CD4-positive, alpha-beta T cell (primary cell): ENCODE measurements at regions of chr16 and their contacts with region 1.

Region 1: DNA sequence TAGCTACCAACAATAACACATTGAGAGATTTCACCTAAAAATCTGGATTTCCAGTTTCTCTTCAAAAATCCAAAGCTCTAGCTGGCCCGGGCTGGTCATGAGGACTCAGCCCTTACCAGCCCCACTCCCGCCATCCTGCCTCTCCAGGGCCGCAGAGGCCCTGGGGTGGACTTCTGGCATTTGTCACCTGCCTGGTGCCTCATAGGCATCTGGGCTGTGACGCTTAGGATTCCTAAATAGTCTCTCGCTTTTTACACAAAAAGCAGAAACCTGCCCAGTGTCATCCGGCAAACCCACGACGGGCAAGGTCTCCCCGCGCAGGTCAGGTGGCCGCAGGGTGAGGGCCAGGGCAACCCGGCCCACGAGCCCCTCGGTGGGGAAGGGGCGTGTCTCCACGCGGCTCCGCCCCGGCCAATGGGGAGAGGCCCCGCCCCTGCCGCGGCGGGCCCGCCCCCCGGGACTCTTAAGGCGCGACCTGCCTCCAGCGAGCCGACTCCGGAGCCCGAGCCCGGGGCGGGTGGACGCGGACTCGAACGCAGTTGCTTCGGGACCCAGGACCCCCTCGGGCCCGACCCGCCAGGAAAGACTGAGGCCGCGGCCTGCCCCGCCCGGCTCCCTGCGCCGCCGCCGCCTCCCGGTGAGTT is at the start of gene VASN:
- DNase-seq: peak; percentile 54 to 86 (median 68)
- ATAC-seq: peak; percentile 71
- H3K4me3 ChIP-seq: peak within 1 kb of the TSS; percentile 49
- H3K4me3 Mint-ChIP-seq: peak within 1 kb of the TSS; percentile 89
- H3K27ac ChIP-seq: no peak within 1 kb of the TSS
- H3K27ac Mint-ChIP-seq: peak within 1 kb of the TSS; percentile 77
- H3K4me1 ChIP-seq: peaks cover 57% of the 10 kb centered on the region
- H3K4me1 Mint-ChIP-seq: peaks cover 35% of the 10 kb centered on the region
- H3K27me3 ChIP-seq: no peaks in the 10 kb centered on the region
- H3K27me3 Mint-ChIP-seq: no peaks in the 10 kb centered on the region
- CTCF ChIP-seq: no peak
- total RNA-seq, gene VASN: 0.70 to 0.77 TPM

Region 2: DNA sequence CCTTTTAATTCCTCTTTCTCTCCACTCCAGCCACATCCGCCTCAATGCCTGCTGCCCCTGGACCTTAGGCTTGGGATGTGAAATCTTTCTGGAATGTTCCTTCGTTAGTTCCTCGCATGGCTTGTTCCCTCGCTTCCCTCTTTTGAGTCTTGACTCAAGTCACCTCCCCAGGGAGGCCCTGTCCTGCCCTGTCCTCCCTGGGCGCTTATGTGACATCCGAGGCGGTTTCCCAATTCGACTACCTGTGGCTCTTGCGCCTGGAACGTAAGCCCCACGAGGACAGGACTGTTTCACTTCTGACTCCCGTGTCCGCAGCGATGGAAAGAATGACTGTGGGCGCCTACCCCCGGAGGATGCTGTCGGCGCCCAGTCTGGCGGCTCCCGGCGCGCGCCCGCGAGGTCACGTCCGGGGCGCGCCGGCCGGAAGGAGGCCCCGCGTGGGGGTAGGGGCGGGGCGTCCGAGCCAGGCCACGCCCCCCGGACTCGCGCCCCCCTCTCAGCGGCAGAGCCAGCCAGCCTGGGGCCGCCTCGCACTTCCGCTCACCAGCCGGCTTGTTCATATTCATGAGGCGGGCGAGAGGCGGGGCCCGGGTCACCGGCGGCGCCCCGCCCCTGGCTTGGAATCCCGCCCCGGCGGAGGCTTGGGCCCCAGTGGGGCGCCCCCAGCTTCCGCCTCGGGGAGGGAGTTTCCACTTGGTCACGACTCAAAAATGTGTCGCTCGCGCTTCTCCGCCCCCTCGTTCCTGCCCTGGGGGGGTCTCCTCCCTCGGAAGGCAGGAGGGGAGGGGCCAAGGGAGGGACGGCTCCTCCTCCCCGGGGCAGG is 64.1 kb before region 1 on chr16:
- CTCF ChIA-PET with region 1: no interaction called
- POLR2A ChIA-PET with region 1: no interaction called
- intact Hi-C with region 1: loop called in 1 of 2 experiments (anchors 1 kb)
- DNase-seq: peak; percentile 91 to 99 (median 96)
- ATAC-seq: peak; percentile 87
- H3K4me3 ChIP-seq: peak overlapping the region; percentile 72
- H3K4me3 Mint-ChIP-seq: peak overlapping the region; percentile 84
- H3K27ac ChIP-seq: peak overlapping the region; percentile 82 to 90
- H3K27ac Mint-ChIP-seq: peak overlapping the region; percentile 96
- H3K4me1 ChIP-seq: peaks cover 31% of the 10 kb centered on the region
- H3K4me1 Mint-ChIP-seq: peaks cover 15% of the 10 kb centered on the region
- H3K27me3 ChIP-seq: no peaks in the 10 kb centered on the region
- H3K27me3 Mint-ChIP-seq: no peaks in the 10 kb centered on the region
- CTCF ChIP-seq: no peak

Region 3: GRCh38 chr16:4386451-4386805 is 14.9 kb after region 1 on chr16:
- CTCF ChIA-PET with region 1: no interaction called
- POLR2A ChIA-PET with region 1: no interaction called
- intact Hi-C with region 1: loop called in 1 of 2 experiments (anchors 2 kb)
- DNase-seq: no peak
- ATAC-seq: no peak
- H3K4me3 ChIP-seq: no peak overlapping the region
- H3K4me3 Mint-ChIP-seq: no peak overlapping the region
- H3K27ac ChIP-seq: no peak overlapping the region
- H3K27ac Mint-ChIP-seq: peak overlapping the region; percentile 80
- H3K4me1 ChIP-seq: peaks cover 6% of the 10 kb centered on the region
- H3K4me1 Mint-ChIP-seq: no peaks in the 10 kb centered on the region
- H3K27me3 ChIP-seq: no peaks in the 10 kb centered on the region
- H3K27me3 Mint-ChIP-seq: no peaks in the 10 kb centered on the region
- CTCF ChIP-seq: no peak

Region 4: DNA sequence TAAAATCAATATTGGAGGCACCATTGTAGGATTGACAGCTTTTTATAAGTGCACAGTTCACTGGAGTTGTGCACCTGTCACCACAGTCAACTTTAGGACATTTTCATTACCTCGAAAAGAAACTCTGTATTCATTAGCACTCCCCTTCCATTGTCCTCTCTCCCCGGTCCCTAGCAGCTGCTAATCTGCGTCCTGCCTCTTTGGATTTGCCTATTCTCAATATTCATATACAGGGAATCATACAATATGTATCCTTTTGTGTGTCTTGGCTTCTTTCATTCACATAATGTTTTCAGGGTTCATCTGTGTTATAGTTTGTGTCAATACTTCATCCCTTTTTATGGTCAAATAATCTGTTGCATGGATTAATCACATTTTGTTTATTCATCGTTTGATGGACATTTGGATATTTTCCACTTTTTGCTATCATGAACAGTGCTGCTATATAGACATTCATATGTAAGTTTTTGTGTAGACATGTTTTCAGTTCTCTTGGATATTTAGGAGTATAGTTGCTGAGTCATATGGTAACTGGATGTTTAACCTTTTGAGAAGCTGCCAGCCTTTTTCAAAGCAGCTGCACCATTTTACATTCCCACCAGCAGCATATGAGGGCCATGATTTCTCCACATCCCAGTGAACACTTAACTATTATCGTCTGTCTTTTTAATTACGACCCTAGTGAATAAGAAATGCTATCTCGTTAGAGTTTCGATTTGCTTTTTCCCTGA is 64.0 kb after region 1 on chr16:
- CTCF ChIA-PET with region 1: no interaction called
- POLR2A ChIA-PET with region 1: no interaction called
- intact Hi-C with region 1: no loop called
- DNase-seq: no peak
- ATAC-seq: no peak
- H3K4me3 ChIP-seq: no peak overlapping the region
- H3K4me3 Mint-ChIP-seq: no peak overlapping the region
- H3K27ac ChIP-seq: no peak overlapping the region
- H3K27ac Mint-ChIP-seq: no peak overlapping the region
- H3K4me1 ChIP-seq: no peaks in the 10 kb centered on the region
- H3K4me1 Mint-ChIP-seq: peaks cover 9% of the 10 kb centered on the region
- H3K27me3 ChIP-seq: no peaks in the 10 kb centered on the region
- H3K27me3 Mint-ChIP-seq: no peaks in the 10 kb centered on the region
- CTCF ChIP-seq: no peak